Caco-2 (cell line): ENCODE measurements at regions of chr13 and their contacts with region 1.

Region 1: GRCh38 chr13:33228648-33229445 is 56.7 kb downstream of the STARD13 start:
- DNase-seq: peak in 1 of 2 experiments; percentile 42
- H3K4me3 ChIP-seq: no peak overlapping the region
- H3K4me3 Mint-ChIP-seq: no peak overlapping the region
- H3K27ac Mint-ChIP-seq: peak overlapping the region; percentile 17
- H3K4me1 ChIP-seq: peaks cover 16% of the 10 kb centered on the region; the same call in 1 of the 2 replicates
- H3K4me1 Mint-ChIP-seq: peaks cover 19% of the 10 kb centered on the region
- H3K27me3 ChIP-seq: no peaks in the 10 kb centered on the region
- H3K27me3 Mint-ChIP-seq: no peaks in the 10 kb centered on the region
- CTCF ChIP-seq: peak; percentile 93 to 95

Region 2: DNA sequence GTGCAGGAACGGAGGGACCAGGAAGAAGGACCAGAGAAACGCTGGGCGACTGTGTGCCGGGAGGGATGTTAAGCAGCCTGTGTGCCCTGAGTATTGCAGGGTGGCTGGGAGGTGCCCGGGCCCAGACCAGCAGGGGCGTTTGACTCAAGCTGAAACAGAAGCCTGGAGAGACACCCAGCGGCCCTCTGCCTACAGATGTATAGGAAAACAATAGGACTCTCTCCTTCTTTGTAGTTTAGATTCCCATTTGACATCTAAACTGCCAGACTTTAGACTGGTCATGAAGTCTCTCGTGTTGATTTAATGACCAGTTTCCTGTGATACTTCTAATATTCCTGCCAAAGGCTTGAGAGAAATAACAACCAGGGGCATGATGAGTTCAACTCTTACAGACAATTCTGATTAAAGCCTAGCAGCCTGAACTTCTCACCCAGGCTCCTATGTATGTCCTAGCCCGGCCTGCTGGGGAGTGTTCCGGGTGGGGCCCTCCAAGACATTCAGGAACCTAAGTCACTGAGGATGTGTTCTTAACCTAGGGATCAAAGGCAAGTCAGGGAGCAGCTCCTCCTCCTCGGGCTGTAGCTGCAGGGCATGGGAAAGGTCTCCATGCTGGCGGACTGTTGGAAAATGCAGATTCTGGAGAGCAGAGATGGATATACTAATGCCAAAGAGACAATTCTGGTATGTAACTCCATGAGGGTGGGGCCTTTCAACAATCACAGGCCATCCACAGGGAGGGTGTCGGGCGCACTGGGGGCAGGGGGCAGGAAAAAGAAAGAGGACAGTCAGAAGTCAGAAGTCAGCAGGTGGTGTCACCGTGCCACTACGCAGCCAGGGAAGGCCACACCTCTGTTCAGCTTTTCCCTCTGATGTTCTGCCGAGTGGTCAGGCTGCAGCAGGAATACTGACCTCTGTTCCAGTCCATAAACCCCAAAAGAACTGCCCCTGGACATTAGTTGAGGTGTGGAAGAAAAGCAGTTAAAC is 75.1 kb before region 1 on chr13:
- CTCF ChIA-PET with region 1: no interaction called
- POLR2A ChIA-PET with region 1: no interaction called
- intact Hi-C with region 1: no loop called
- DNase-seq: peak; percentile 11 to 75
- H3K4me3 ChIP-seq: no peak overlapping the region
- H3K4me3 Mint-ChIP-seq: no peak overlapping the region
- H3K27ac Mint-ChIP-seq: peak overlapping the region; percentile 43
- H3K4me1 ChIP-seq: peaks cover 28% of the 10 kb centered on the region
- H3K4me1 Mint-ChIP-seq: peaks cover 31% of the 10 kb centered on the region
- H3K27me3 ChIP-seq: no peaks in the 10 kb centered on the region
- H3K27me3 Mint-ChIP-seq: no peaks in the 10 kb centered on the region
- CTCF ChIP-seq: no peak

Region 3: DNA sequence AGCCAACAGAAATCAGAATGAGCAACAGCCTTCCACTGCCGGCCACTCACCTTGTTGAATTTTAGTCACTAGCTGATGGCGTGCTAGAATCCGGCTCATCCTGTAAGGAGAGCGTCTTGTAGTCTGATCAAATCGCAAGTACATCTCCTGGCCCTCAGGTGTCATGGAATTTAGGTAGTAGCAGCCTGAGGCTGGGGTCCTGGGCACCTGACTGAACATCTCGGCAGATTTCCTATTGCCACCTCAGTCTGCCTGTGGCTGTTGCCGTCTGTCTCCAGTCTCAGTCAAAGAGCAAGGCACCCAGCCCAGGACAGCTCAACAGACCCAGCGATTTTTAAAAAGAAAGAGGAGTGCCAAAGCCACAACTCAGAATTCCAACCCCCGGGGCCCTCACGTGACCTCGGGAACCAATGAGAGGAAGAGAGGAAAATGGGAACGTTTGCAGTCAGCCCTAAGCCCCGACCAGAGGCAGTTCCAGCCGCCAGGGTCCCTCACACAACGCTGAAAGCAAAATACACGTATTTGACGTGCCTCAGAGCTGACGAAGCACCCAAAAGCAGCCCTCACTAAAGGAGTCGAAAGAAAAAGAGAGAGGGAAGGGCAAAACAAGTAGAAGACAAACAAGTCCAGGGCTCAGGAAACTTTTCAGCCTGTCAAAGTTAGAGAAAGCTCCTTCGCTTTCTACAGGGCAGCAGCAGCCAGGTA is 56.7 kb after region 1 on chr13 and contains the start of gene STARD13:
- CTCF ChIA-PET with region 1: interaction called, 10 read pairs
- POLR2A ChIA-PET with region 1: interaction called, 10 read pairs
- intact Hi-C with region 1: loop called (anchors 2 kb)
- DNase-seq: peak; percentile 94 to 96
- H3K4me3 ChIP-seq: peak within 1 kb of the TSS; percentile 49
- H3K4me3 Mint-ChIP-seq: peak within 1 kb of the TSS; percentile 86
- H3K27ac Mint-ChIP-seq: peak within 1 kb of the TSS; percentile 96
- H3K4me1 ChIP-seq: peaks cover 7% of the 10 kb centered on the region; the same call in 1 of the 2 replicates
- H3K4me1 Mint-ChIP-seq: peaks cover 11% of the 10 kb centered on the region
- H3K27me3 ChIP-seq: no peaks in the 10 kb centered on the region
- H3K27me3 Mint-ChIP-seq: no peaks in the 10 kb centered on the region
- CTCF ChIP-seq: peak; percentile 15 to 44
- total RNA-seq, gene STARD13: 9.1 and 12.9 TPM in 2 replicates

Region 4: GRCh38 chr13:33312150-33312860 is 83.5 kb after region 1 on chr13:
- CTCF ChIA-PET with region 1: no interaction called
- POLR2A ChIA-PET with region 1: no interaction called
- intact Hi-C with region 1: loop called (anchors 1 kb)
- DNase-seq: peak in 1 of 2 experiments; percentile 31
- H3K4me3 ChIP-seq: no peak overlapping the region
- H3K4me3 Mint-ChIP-seq: no peak overlapping the region
- H3K27ac Mint-ChIP-seq: no peak overlapping the region
- H3K4me1 ChIP-seq: no peaks in the 10 kb centered on the region
- H3K4me1 Mint-ChIP-seq: no peaks in the 10 kb centered on the region
- H3K27me3 ChIP-seq: no peaks in the 10 kb centered on the region
- H3K27me3 Mint-ChIP-seq: no peaks in the 10 kb centered on the region
- CTCF ChIP-seq: peak; percentile 21 to 44

Region 5: DNA sequence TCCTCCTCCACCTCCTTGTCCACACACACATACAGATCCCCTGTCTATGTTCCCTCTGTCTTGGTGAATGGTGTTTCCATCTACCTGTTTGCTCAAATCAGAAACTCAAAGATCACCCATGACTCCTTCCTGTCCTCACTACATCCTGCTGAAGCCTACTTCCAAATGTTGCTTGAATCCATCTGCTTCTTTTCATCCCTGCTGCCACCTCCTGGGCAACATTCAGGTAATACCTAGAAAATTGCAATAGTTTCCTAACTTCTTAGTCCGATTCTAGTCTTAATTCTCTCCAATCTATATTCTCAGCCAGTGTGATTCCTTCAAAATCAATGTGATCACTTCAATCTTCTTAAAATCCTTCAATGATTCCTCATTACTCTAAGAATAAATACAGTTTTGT is 212.2 kb after region 1 on chr13:
- CTCF ChIA-PET with region 1: no interaction called
- POLR2A ChIA-PET with region 1: no interaction called
- intact Hi-C with region 1: loop called (anchors 1 kb)
- DNase-seq: peak in 1 of 2 experiments; percentile 34
- H3K4me3 ChIP-seq: no peak overlapping the region
- H3K4me3 Mint-ChIP-seq: no peak overlapping the region
- H3K27ac Mint-ChIP-seq: no peak overlapping the region
- H3K4me1 ChIP-seq: peaks cover 8% of the 10 kb centered on the region; the same call in 1 of the 2 replicates
- H3K4me1 Mint-ChIP-seq: no peaks in the 10 kb centered on the region
- H3K27me3 ChIP-seq: no peaks in the 10 kb centered on the region
- H3K27me3 Mint-ChIP-seq: no peaks in the 10 kb centered on the region
- CTCF ChIP-seq: peak; percentile 42 to 51

Region 6: DNA sequence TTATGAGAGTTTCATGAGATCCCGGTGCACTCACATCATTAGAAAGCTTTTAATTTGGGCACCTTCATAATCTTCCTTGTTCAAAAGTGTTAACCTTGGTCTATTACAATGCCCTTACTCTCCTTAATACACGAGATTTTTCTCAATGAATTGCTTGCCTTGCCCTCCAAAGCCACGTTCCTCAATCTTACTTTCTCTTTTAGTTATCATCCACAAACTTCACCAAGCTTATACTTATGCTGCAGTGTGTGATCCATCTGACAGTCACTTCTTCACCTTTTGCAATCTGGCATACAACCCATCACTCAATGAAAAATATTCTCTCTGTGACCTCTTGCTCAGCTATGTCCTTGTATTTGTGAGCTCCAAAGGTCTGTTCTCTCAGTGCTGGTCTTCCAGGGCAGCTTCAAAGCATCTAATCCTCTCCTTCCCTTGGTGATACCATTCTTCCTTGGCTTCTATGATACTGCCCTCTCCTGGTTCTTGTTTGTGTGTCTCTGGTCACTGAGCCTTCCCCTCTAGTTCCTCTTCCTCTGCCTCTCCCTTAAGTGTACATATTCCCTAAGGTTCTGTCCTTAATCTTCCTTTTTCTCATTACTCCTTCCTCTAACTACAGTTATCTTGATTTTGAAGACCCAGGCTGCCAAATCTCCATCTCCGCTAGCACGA is 258.9 kb after region 1 on chr13:
- CTCF ChIA-PET with region 1: interaction called, 4 read pairs
- POLR2A ChIA-PET with region 1: no interaction called
- intact Hi-C with region 1: loop called (anchors 1 kb)
- DNase-seq: no peak
- H3K4me3 ChIP-seq: no peak overlapping the region
- H3K4me3 Mint-ChIP-seq: no peak overlapping the region
- H3K27ac Mint-ChIP-seq: no peak overlapping the region
- H3K4me1 ChIP-seq: no peaks in the 10 kb centered on the region
- H3K4me1 Mint-ChIP-seq: peaks cover 6% of the 10 kb centered on the region
- H3K27me3 ChIP-seq: no peaks in the 10 kb centered on the region
- H3K27me3 Mint-ChIP-seq: peaks cover 3% of the 10 kb centered on the region
- CTCF ChIP-seq: peak in 1 of 2 experiments; percentile 3

Region 7: GRCh38 chr13:33723772-33724435 is 495.1 kb after region 1 on chr13:
- CTCF ChIA-PET with region 1: no interaction called
- POLR2A ChIA-PET with region 1: no interaction called
- intact Hi-C with region 1: loop called (anchors 1 kb)
- DNase-seq: peak; percentile 83 to 85
- H3K4me3 ChIP-seq: no peak overlapping the region
- H3K4me3 Mint-ChIP-seq: no peak overlapping the region
- H3K27ac Mint-ChIP-seq: peak overlapping the region; percentile 59
- H3K4me1 ChIP-seq: peaks cover 10% of the 10 kb centered on the region
- H3K4me1 Mint-ChIP-seq: peaks cover 8% of the 10 kb centered on the region
- H3K27me3 ChIP-seq: no peaks in the 10 kb centered on the region
- H3K27me3 Mint-ChIP-seq: no peaks in the 10 kb centered on the region
- CTCF ChIP-seq: peak; percentile 75 to 79